ENCODE measurements at regions of chr1 and their contacts with region 1.

Region 1: GRCh38 chr1:160354388-160354985 is 11.3 kb downstream of the NCSTN start:
- DNase-seq: no peak
- H3K4me3 ChIP-seq: no peak overlapping the region
- H3K27ac ChIP-seq: no peak overlapping the region
- H3K27me3 ChIP-seq: no peaks in the 10 kb centered on the region
- CTCF ChIP-seq: peak; percentile 55

Region 2: DNA sequence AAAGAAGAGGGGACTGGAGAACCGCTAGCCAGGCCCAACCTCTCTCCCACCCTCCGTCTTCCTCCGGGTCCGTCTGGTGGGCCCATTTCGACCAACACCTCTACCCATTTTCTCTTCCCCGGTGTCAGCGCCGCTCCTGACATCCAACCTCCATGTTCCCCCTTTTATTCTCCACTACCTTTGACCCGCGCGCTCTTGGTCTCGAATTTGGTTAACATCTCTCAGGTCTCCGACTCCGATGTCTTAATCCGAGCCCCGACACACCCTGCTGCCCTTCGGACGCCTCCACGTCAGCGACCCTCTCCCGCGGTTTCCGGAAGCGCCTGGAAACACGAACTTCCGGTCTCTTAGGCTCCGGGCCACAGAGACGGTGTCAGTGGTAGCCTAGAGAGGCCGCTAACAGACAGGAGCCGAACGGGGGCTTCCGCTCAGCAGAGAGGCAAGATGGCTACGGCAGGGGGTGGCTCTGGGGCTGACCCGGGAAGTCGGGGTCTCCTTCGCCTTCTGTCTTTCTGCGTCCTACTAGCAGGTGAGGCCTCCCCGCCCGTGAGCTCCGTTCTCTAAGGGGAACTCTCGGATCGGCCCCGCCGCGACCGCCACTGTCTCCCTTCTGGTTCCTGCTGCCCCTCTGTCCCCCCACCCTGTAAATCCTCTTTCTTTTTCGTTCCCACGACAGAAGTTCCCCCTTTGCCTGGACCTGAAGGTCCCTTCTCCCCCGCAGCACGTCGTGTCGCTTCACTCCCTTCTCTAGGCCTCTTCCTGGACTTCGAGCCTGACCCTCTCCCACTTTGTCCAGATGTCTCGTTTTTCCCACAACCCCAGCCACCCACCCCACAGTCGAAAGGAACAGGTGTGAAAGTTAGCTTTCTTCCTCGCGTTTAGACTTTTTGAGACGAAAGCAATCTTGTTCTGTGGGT is 11.3 kb before region 1 on chr1 and contains the starts of genes COPA and NCSTN:
- CTCF ChIA-PET with region 1: interaction called, 23 read pairs
- POLR2A ChIA-PET with region 1: no interaction called
- DNase-seq: peak; percentile 90
- H3K4me3 ChIP-seq: peak within 1 kb of the TSS; percentile 77
- H3K27ac ChIP-seq: peak within 1 kb of the TSS; percentile 92
- H3K27me3 ChIP-seq: no peaks in the 10 kb centered on the region
- CTCF ChIP-seq: 0 out of 2 replicates have a peak, but pooled peaks have one; percentile 3
- polyA plus RNA-seq, gene COPA: 366 and 384 TPM in 2 replicates
- polyA plus RNA-seq, gene NCSTN: 189 and 195 TPM in 2 replicates

Region 3: DNA sequence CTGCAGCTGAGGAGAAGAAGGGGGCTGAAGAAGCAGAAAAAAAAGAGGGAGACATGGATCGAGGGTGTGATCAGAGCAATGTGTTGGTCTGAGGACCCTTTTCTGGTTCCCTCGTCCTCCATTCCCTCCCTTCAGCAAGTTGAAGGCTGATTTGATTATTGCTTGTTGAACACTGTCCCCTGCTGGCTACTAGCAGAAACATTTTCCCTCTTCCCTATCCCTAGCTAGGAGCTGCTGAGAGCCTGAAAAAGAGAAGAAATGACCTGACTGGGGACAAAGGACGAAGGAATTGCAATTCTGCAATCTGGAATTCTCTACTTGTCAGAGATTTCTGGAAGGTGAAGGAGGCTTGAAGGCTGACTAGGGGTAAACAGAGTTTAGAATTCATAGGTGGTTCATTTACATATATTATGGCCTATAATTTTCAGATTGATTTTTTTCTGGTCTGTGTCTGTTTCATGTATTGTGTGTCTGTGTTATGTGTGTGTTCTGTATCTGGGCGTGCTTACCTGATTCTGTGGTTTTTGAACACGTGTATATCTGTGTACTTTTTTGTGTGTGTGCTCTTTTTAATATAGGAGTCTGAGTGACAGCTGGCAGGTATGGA is 22.1 kb after region 1 on chr1:
- CTCF ChIA-PET with region 1: interaction called, 74 read pairs
- POLR2A ChIA-PET with region 1: no interaction called
- DNase-seq: peak; percentile 37
- H3K4me3 ChIP-seq: no peak overlapping the region
- H3K27ac ChIP-seq: no peak overlapping the region
- H3K27me3 ChIP-seq: peaks cover 2% of the 10 kb centered on the region
- CTCF ChIP-seq: peak; percentile 99

Measured in AG04450 (cell line).